AG04450 (cell line): ENCODE measurements at regions of chr4 and their contacts with region 1.

Region 1: DNA sequence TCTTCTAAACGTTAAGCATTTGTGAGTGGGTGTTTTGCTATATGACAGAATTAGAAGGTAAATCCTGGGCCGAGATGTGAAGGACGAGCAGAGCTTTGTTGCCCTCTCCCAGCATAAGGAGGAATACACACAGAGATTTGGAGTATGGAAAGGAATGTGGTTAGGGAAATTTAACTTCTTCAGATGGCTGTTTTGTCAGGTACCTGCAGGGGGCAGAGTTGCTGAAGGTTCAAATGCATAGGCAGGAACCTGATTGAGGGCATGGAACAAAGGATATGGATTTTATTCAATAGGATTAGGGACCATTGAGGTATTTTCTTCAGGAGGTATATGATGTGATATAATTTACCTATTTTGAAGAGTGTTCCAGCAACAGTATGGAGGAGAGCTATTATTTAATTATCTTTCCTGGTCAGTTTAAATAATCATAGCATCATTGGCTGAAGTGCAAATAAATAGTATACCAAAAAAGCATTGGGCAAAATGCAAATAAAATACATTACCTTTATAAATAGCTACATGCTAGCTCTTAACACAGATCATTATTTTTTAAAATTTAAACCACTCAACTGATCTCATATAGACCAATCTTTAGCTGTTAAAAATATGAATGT is 143.6 kb downstream of the SLIT2 start:
- DNase-seq: no peak
- H3K4me3 ChIP-seq: no peak overlapping the region
- H3K27ac ChIP-seq: no peak overlapping the region
- H3K27me3 ChIP-seq: no peaks in the 10 kb centered on the region
- CTCF ChIP-seq: peak; percentile 66

Region 2: GRCh38 chr4:19880206-19880605 is 515.1 kb before region 1 on chr4:
- CTCF ChIA-PET with region 1: no interaction called
- POLR2A ChIA-PET with region 1: no interaction called
- DNase-seq: no peak
- H3K4me3 ChIP-seq: no peak overlapping the region
- H3K27ac ChIP-seq: no peak overlapping the region
- H3K27me3 ChIP-seq: no peaks in the 10 kb centered on the region
- CTCF ChIP-seq: no peak

Region 3: GRCh38 chr4:20181926-20182325 is 213.3 kb before region 1 on chr4:
- CTCF ChIA-PET with region 1: no interaction called
- POLR2A ChIA-PET with region 1: no interaction called
- DNase-seq: no peak
- H3K4me3 ChIP-seq: no peak overlapping the region
- H3K27ac ChIP-seq: no peak overlapping the region
- H3K27me3 ChIP-seq: no peaks in the 10 kb centered on the region
- CTCF ChIP-seq: no peak

Region 4: DNA sequence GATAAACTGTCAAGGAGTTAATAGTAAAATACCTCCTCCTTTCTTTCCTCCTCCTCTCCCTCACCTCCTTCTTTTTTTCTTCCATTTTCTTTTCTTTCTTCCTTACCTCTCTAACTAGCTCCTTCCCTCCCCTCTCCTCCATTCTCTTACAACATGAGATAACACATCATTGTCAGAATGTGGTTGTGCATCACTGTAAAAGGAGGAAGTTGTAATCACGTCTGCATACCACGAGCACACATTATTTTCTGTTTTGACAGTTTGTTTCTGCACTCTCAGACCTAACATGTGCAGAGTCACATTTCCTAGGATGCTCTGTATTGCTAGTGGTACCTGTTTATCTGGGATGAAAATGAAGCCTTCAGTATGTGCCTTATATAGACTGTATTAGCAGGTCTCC is 134.4 kb before region 1 on chr4:
- CTCF ChIA-PET with region 1: no interaction called
- POLR2A ChIA-PET with region 1: no interaction called
- DNase-seq: no peak
- H3K4me3 ChIP-seq: no peak overlapping the region
- H3K27ac ChIP-seq: no peak overlapping the region
- H3K27me3 ChIP-seq: no peaks in the 10 kb centered on the region
- CTCF ChIP-seq: no peak

Region 5: GRCh38 chr4:20408611-20409010 is 13.3 kb after region 1 on chr4:
- CTCF ChIA-PET with region 1: interaction called, 28 read pairs
- POLR2A ChIA-PET with region 1: interaction called, 5 read pairs
- DNase-seq: no peak
- H3K4me3 ChIP-seq: no peak overlapping the region
- H3K27ac ChIP-seq: no peak overlapping the region
- H3K27me3 ChIP-seq: no peaks in the 10 kb centered on the region
- CTCF ChIP-seq: no peak

Region 6: DNA sequence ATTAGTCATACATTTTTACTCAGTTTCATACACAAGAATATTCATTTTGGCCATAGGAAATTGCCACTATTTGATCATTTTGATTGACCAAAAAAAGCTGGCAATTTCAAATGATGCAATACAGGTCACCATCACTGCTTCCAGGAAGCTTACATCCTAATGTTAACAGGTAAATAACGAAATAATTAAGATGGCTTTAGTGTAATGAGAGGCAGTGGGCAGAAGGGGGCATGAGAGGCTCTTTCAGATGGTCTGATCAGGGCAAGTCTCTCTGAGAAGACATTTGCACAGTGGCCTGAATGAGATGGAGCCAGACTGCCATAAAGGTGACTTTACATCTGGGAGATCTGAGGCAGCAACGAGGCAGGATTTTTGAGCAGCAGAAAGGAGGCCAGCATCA is 27.1 kb after region 1 on chr4:
- CTCF ChIA-PET with region 1: interaction called, 11 read pairs
- POLR2A ChIA-PET with region 1: no interaction called
- DNase-seq: no peak
- H3K4me3 ChIP-seq: no peak overlapping the region
- H3K27ac ChIP-seq: no peak overlapping the region
- H3K27me3 ChIP-seq: no peaks in the 10 kb centered on the region
- CTCF ChIP-seq: peak; percentile 58

Region 7: GRCh38 chr4:20944451-20944850 is 549.2 kb after region 1 on chr4:
- CTCF ChIA-PET with region 1: no interaction called
- POLR2A ChIA-PET with region 1: no interaction called
- DNase-seq: no peak
- H3K4me3 ChIP-seq: no peak overlapping the region
- H3K27ac ChIP-seq: no peak overlapping the region
- H3K27me3 ChIP-seq: no peaks in the 10 kb centered on the region
- CTCF ChIP-seq: no peak